ENCODE measurements at regions of chr17 and their contacts with region 1.

Region 1: DNA sequence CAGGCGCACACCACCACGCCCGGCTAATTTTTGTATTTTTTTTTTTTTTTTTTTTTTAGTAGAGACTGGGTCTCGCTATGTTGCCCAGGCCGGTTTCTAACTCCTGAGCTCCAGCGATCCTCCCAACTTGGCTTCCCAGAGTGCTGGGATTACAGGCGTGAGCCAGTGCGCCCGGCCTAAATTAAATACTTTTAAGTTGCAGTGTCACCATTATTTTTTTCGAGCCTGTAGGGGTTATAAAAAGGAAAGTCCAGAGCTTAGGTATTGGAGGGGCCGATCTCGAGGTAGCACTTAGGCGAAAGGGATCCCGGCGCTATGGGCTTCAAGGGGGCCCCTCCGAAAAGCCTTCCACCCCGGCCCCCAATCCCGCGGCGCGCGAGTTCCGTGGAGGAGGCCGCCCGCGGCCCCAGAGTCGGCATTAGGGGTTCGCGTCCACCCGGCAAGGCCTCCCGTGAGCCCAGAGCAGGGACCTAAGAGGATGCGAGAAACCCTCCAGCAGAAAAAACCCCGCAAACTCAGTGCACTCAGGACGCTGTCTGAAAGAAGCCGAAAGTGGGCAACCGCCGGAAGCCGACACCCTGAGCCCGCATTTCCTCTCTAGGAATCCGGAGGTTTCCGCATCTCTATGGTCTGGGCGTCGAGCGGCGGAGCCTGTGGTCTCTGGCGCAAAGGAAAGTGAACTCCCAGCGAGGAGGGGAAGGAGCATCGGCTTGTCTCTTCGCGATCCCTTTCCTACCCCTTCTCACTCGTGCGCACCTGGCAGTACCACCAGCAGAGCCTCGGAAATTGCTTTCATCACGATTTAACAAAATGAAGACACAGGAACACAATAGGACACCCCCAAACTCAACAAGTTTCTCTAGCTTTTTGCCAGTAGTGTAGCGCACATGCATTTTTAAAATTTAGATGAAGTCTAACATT is 14.1 kb upstream of the RGS9 start:
- DNase-seq: peak; percentile 91

Region 2: DNA sequence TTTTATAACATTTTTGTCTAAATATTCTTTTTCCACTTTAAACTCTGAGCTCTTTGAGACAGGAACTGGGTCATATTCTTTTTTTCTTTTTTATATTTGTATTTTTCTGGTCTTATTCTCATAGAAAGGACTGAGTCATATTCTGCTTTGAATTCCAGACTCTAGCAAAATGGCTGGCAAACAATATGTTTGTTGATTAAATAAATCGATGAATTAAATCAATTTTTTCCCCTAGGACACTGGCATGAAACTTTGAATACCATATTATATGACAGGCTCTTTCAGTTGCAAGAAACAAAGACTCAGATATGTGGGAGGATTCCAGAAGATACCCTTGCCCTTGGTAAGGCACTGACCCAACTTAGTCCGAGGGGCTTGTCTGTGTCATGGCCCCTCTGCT is 10.9 kb after region 1 on chr17:
- CTCF ChIA-PET with region 1: interaction called, 3 read pairs
- POLR2A ChIA-PET with region 1: interaction called, 17 read pairs
- DNase-seq: no peak

Region 3: GRCh38 chr17:65139101-65139764 is 16.1 kb after region 1 on chr17:
- CTCF ChIA-PET with region 1: interaction called, 3 read pairs
- POLR2A ChIA-PET with region 1: interaction called, 17 read pairs
- DNase-seq: no peak

Region 4: GRCh38 chr17:65158622-65159021 is 35.5 kb after region 1 on chr17:
- CTCF ChIA-PET with region 1: no interaction called
- POLR2A ChIA-PET with region 1: no interaction called
- DNase-seq: no peak

Measured in HEK293T (cell line).